Panc1 (cell line): ENCODE measurements at regions of chr4 and their contacts with region 1.

Region 1: GRCh38 chr4:99067617-99068016 is 21.0 kb downstream of the ADH5 start:
- DNase-seq: no peak
- ATAC-seq: no peak
- H3K4me3 ChIP-seq: no peak overlapping the region
- H3K27ac ChIP-seq: no peak overlapping the region
- H3K4me1 ChIP-seq: no peaks in the 10 kb centered on the region; the same call in 1 of the 2 replicates
- H3K27me3 ChIP-seq: no peaks in the 10 kb centered on the region
- CTCF ChIP-seq: no peak

Region 2: GRCh38 chr4:98639523-98639922 is 428.1 kb before region 1 on chr4:
- CTCF ChIA-PET with region 1: no interaction called
- POLR2A ChIA-PET with region 1: interaction called, 10 read pairs
- in situ Hi-C with region 1: no loop called
- intact Hi-C with region 1: no loop called
- DNase-seq: no peak
- ATAC-seq: no peak
- H3K4me3 ChIP-seq: no peak overlapping the region
- H3K27ac ChIP-seq: peak overlapping the region; percentile 69; the same call in 1 of the 2 replicates
- H3K4me1 ChIP-seq: peaks cover 69% of the 10 kb centered on the region
- H3K27me3 ChIP-seq: no peaks in the 10 kb centered on the region
- CTCF ChIP-seq: no peak